Endothelial cell of umbilical vein (primary cell): ENCODE measurements at regions of chr7 and their contacts with region 1.

Region 1: GRCh38 chr7:19747740-19748339 is 25.6 kb downstream of the TMEM196 start:
- DNase-seq: peak; percentile 43
- H3K4me3 ChIP-seq: no peak overlapping the region
- H3K27ac ChIP-seq: no peak overlapping the region
- H3K4me1 ChIP-seq: no peaks in the 10 kb centered on the region
- H3K27me3 ChIP-seq: peaks cover 1 to 12% of the 10 kb centered on the region in 2 experiments
- CTCF ChIP-seq: peak; percentile 25 to 46
- POLR2A ChIP-seq: no peak

Region 2: DNA sequence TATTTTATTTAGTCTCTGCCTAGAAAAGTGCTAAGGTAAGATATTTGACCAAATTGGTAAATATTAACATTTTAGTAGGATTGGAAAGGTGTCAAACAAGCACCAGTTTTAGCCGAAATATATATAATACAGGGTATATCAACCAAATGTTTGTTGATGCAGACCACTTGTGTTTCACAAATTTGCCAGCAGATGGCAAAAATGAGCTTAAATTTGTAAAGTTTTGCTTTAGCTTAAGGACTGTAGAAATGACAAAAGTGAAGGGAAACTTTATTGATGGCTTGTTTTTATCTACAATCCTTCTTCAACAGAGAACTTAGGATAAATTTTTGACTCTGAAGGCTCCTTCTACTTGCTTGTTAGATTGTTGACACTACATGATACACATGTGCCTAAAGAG is 34.2 kb before region 1 on chr7:
- CTCF ChIA-PET with region 1: interaction called, 71 read pairs
- POLR2A ChIA-PET with region 1: no interaction called
- dilution Hi-C with region 1: no loop called
- intact Hi-C with region 1: no loop called
- DNase-seq: peak; percentile 62
- H3K4me3 ChIP-seq: no peak overlapping the region
- H3K27ac ChIP-seq: no peak overlapping the region
- H3K4me1 ChIP-seq: no peaks in the 10 kb centered on the region
- H3K27me3 ChIP-seq: peaks cover 10 to 29% of the 10 kb centered on the region in 2 experiments
- CTCF ChIP-seq: peak; percentile 20 to 39
- POLR2A ChIP-seq: no peak

Region 3: DNA sequence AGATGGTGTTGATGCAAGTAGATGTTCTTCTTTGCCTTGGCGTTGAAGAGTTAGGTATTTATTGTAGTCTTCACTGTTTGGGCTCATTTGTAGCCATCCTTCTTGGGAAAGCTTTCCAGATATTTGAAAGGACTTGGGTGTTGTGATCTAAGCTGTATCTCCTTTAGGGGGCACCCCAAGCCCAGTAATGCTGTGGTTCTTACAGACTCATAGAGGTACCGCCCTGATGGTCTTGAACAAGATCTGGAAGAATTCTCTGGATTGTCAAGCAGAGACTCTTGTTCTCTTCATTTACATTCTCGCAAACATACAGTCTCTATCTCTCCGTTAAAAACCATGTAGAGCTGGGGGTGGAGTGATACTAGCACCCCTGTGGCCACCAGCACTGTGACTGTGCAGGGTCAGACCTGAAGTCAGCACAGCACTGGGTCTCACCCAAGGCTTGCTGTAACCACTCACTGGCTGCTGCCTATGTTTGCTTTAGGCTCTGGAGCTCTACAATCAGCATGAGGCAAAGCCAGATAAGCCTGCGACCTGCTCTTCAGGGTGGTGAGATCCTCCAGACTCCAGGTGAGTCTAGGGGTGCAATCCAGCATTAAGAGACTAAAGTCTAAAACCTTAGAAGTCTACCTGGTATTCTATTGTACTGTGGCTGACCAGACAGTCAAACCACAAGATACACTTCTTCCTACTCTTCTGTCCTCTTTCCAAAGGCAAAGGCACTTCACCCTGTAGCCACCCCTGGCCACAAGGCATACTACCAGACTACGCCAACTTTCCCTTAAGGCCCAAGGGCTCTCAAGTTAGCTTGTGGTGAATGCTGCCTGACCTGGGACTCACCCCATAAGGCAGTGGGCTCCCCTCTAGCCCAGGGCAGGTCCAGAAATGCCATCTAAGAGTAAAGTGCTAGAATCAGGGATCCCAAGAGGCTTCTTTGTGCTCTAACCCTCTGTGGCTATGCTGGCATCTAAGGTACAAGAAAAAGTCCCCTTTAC is 235.3 kb after region 1 on chr7:
- CTCF ChIA-PET with region 1: interaction called, 15 read pairs
- POLR2A ChIA-PET with region 1: no interaction called
- dilution Hi-C with region 1: no loop called
- intact Hi-C with region 1: no loop called
- DNase-seq: peak; percentile 58
- H3K4me3 ChIP-seq: no peak overlapping the region
- H3K27ac ChIP-seq: no peak overlapping the region
- H3K4me1 ChIP-seq: no peaks in the 10 kb centered on the region
- H3K27me3 ChIP-seq: no peaks in the 10 kb centered on the region
- CTCF ChIP-seq: peak in 1 of 2 donors; percentile 31
- POLR2A ChIP-seq: no peak

Region 4: GRCh38 chr7:20199015-20199737 is 451.3 kb after region 1 on chr7:
- CTCF ChIA-PET with region 1: interaction called, 11 read pairs
- POLR2A ChIA-PET with region 1: no interaction called
- dilution Hi-C with region 1: no loop called
- intact Hi-C with region 1: no loop called
- DNase-seq: peak; percentile 83
- H3K4me3 ChIP-seq: no peak overlapping the region
- H3K27ac ChIP-seq: no peak overlapping the region
- H3K4me1 ChIP-seq: peaks cover 11% of the 10 kb centered on the region
- H3K27me3 ChIP-seq: no peaks in the 10 kb centered on the region
- CTCF ChIP-seq: no peak
- POLR2A ChIP-seq: no peak

Region 5: DNA sequence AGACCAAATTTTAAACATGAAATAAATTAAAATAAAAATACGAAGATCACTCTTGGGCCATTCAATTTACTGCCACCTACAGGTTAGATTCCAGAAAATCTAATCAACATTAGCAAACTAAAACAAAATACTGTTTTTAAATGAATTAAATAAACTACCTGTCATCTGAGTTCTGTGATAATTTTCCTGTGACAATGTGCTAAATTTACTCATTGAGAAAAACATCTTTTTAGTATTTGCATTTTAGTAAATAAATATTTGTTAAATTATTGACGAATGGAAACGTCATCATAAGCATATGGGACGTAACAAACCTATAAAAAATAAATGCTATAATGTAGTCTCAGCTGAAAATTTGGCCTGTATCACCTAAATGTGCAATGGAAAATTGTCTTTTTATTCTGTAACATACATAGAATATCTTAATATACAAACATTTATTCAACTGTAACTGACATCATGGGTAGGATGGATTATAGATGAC is 654.9 kb after region 1 on chr7:
- CTCF ChIA-PET with region 1: interaction called, 5 read pairs
- POLR2A ChIA-PET with region 1: no interaction called
- dilution Hi-C with region 1: no loop called
- intact Hi-C with region 1: loop called (anchors 2 kb)
- DNase-seq: no peak
- H3K4me3 ChIP-seq: no peak overlapping the region
- H3K27ac ChIP-seq: no peak overlapping the region
- H3K4me1 ChIP-seq: peaks cover 16% of the 10 kb centered on the region
- H3K27me3 ChIP-seq: no peaks in the 10 kb centered on the region
- CTCF ChIP-seq: peak; percentile 23 to 31
- POLR2A ChIP-seq: no peak

Region 6: DNA sequence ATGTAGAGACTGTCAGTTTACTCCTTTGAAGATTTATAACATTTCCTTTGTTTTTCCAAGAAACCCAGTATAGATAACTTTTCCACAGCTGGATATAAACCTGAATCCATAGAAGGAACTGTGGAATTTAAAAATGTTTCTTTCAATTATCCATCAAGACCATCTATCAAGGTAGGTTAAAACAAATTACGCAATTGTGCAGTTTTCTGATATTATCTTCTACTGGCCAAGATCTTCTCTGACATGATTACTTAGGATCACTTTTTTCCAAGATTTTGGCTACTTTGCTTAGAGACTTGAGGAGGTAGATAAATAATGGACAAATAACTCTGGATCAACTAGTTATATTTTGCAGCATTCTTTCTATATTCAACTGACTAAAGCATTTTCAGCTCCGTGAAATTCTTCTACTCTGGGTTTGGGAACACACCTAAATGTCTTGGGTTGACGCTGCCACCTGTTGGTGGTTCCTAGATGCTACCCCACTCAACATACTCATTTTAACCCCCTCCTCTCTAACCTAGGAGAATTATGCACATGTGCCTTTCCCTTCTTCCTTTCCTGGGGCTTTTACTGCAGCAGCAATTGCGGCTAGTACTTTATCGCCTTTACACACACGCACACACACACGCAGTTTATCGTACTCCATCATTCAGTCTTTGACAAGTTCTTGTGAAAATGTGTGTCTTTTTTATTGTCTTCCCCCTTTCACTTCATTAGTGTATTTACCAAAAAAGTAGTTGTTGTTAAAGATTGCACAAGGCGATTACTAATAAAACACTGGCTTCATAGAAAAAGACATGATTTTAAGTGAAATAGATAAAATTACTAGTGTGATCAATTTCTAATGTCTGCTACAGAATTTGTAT is 900.3 kb after region 1 on chr7:
- CTCF ChIA-PET with region 1: interaction called, 302 read pairs
- POLR2A ChIA-PET with region 1: no interaction called
- dilution Hi-C with region 1: no loop called
- intact Hi-C with region 1: loop called (anchors 1 kb)
- DNase-seq: peak; percentile 64
- H3K4me3 ChIP-seq: no peak overlapping the region
- H3K27ac ChIP-seq: no peak overlapping the region
- H3K4me1 ChIP-seq: no peaks in the 10 kb centered on the region
- H3K27me3 ChIP-seq: peaks cover 0 to 4% of the 10 kb centered on the region in 2 experiments
- CTCF ChIP-seq: peak; percentile 54 to 64
- POLR2A ChIP-seq: no peak